ENCODE measurements at regions of chr3 and their contacts with region 1.

Region 1: GRCh38 chr3:182683453-182683852 is 109.9 kb upstream of the ATP11B start:
- DNase-seq: peak; percentile 67 to 79 (median 69)
- ATAC-seq: peak; percentile 84
- H3K4me3 ChIP-seq: no peak overlapping the region
- H3K27ac ChIP-seq: no peak overlapping the region
- H3K4me1 ChIP-seq: peaks cover 0 to 10% of the 10 kb centered on the region in 2 experiments; a peak in 2 of 5 replicates
- H3K27me3 ChIP-seq: 0 out of 5 replicates have a peak, but pooled peaks cover 0 to 4% of the 10 kb centered on the region in 2 experiments
- CTCF ChIP-seq: peak; percentile 81 to 96 (median 91)
- EP300 ChIP-seq: no peak
- POLR2A ChIP-seq: no peak
- RAD21 ChIP-seq: peak; percentile 85 to 93

Region 2: GRCh38 chr3:181210275-181210674 is 1473.2 kb before region 1 on chr3:
- CTCF ChIA-PET with region 1: no interaction called
- POLR2A ChIA-PET with region 1: no interaction called
- in situ Hi-C with region 1: no loop called
- intact Hi-C with region 1: loop called (anchors 10 kb)
- DNase-seq: peak in 1 of 4 experiments; percentile 3
- ATAC-seq: no peak
- H3K4me3 ChIP-seq: no peak overlapping the region
- H3K27ac ChIP-seq: no peak overlapping the region
- H3K4me1 ChIP-seq: no peaks in the 10 kb centered on the region
- H3K27me3 ChIP-seq: no peaks in the 10 kb centered on the region
- CTCF ChIP-seq: peak in 1 of 3 experiments; percentile 28; a peak in 2 of 6 replicates
- EP300 ChIP-seq: no peak
- POLR2A ChIP-seq: no peak
- RAD21 ChIP-seq: no peak

Region 3: GRCh38 chr3:181326637-181327223 is 1356.7 kb before region 1 on chr3:
- CTCF ChIA-PET with region 1: no interaction called
- POLR2A ChIA-PET with region 1: no interaction called
- in situ Hi-C with region 1: no loop called
- intact Hi-C with region 1: loop called (anchors 10 kb)
- DNase-seq: peak; percentile 16 to 25 (median 20)
- ATAC-seq: no peak
- H3K4me3 ChIP-seq: no peak overlapping the region
- H3K27ac ChIP-seq: no peak overlapping the region
- H3K4me1 ChIP-seq: no peaks in the 10 kb centered on the region
- H3K27me3 ChIP-seq: no peaks in the 10 kb centered on the region
- CTCF ChIP-seq: peak in 2 of 3 experiments; percentile 37 to 51; a peak in 4 of 6 replicates
- EP300 ChIP-seq: no peak
- POLR2A ChIP-seq: no peak
- RAD21 ChIP-seq: peak; percentile 37 to 41; a peak in 3 of 4 replicates

Region 4: GRCh38 chr3:181709537-181710279 is 973.7 kb before region 1 on chr3:
- CTCF ChIA-PET with region 1: interaction called, 11 read pairs
- POLR2A ChIA-PET with region 1: no interaction called
- in situ Hi-C with region 1: loop called (anchors 10 kb)
- intact Hi-C with region 1: loop called (anchors 1 kb)
- DNase-seq: peak; percentile 51 to 72 (median 56)
- ATAC-seq: peak; percentile 82
- H3K4me3 ChIP-seq: no peak overlapping the region
- H3K27ac ChIP-seq: no peak overlapping the region
- H3K4me1 ChIP-seq: peaks cover 0 to 4% of the 10 kb centered on the region in 2 experiments; a peak in 2 of 5 replicates
- H3K27me3 ChIP-seq: peaks cover 2 to 16% of the 10 kb centered on the region in 2 experiments; a peak in 3 of 5 replicates
- CTCF ChIP-seq: peak; percentile 60 to 77 (median 67)
- EP300 ChIP-seq: no peak
- POLR2A ChIP-seq: no peak
- RAD21 ChIP-seq: peak; percentile 70 to 79

Region 5: DNA sequence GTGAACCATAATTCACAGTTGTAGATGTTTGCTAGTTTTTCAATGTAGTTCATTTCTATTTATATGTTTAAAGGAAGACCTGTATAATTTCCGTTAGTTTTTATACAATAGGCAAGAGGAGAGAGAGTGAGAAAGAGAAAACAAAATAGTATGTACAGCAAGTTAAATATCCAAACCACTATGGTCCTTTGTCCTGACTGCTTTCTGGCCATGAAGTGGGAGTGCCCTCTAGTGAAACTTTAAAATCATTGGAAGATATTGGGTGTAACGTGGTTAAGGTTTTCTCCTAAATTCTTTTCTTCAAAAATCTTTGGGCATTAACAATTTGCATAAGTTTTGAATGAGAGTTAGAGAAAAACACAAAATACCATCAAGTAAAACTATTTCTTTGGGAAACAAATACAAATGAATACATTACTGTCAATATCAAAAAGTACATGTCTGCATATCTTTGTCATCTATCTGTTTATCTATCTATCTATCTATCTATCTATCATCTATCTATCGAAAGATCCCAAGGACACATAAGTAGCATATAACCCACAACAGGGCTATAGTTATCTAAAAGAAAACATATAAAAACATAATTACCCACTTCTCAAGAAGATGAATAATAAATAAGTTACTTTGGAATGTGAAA is 424.8 kb before region 1 on chr3:
- CTCF ChIA-PET with region 1: no interaction called
- POLR2A ChIA-PET with region 1: no interaction called
- in situ Hi-C with region 1: no loop called
- intact Hi-C with region 1: loop called (anchors 10 kb)
- DNase-seq: peak in 1 of 4 experiments; percentile 29
- ATAC-seq: 0 out of 3 replicates have a peak, but pooled peaks have one; percentile 49
- H3K4me3 ChIP-seq: no peak overlapping the region
- H3K27ac ChIP-seq: no peak overlapping the region
- H3K4me1 ChIP-seq: peaks cover 0 to 3% of the 10 kb centered on the region in 2 experiments; a peak in 1 of 5 replicates
- H3K27me3 ChIP-seq: no peaks in the 10 kb centered on the region
- CTCF ChIP-seq: peak in 2 of 3 experiments; percentile 22 to 57; a peak in 2 of 6 replicates
- EP300 ChIP-seq: no peak
- POLR2A ChIP-seq: no peak
- RAD21 ChIP-seq: peak; percentile 70

Region 6: DNA sequence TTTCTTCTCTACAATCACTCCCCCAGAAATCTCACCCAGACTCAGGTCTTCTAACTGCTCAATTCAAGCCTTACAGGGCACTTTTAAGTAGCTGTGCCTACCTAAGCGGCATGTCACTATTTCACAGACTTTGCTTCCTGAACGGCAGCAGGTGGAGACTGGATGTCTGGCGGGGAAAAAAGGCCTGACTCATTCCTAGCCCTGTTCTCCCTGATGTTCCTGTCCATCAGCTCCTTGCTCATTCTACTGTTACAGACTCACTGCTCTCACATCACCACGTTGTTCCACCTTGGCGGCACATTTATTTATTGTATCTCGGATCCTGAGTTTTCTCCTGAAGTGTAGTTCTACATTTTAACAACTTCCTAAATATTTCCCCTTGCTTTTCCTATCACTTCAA is 57.3 kb after region 1 on chr3:
- CTCF ChIA-PET with region 1: no interaction called
- POLR2A ChIA-PET with region 1: no interaction called
- in situ Hi-C with region 1: no loop called
- intact Hi-C with region 1: no loop called
- DNase-seq: peak in 2 of 4 experiments; percentile 58 to 73
- ATAC-seq: peak; percentile 87
- H3K4me3 ChIP-seq: no peak overlapping the region
- H3K27ac ChIP-seq: peak overlapping the region; percentile 22; the same call in 1 of the 3 replicates
- H3K4me1 ChIP-seq: peaks cover 8 to 20% of the 10 kb centered on the region in 2 experiments
- H3K27me3 ChIP-seq: no peaks in the 10 kb centered on the region; a peak in 1 of 5 replicates
- CTCF ChIP-seq: no peak
- EP300 ChIP-seq: no peak; the same call in 1 of the 2 replicates
- POLR2A ChIP-seq: no peak
- RAD21 ChIP-seq: no peak

Measured in K562 (cell line).